Pancreas (tissue), 10 donors: ENCODE measurements at regions of chr2 and their contacts with region 1.

Region 1: GRCh38 chr2:37982147-37982582 is 57.1 kb downstream of the RMDN2 start:
- DNase-seq: peak in 5 of 6 donors; percentile 32 to 76 (median 53)
- ATAC-seq: peak; percentile 46 to 71 (median 60)
- H3K4me3 ChIP-seq: no peak overlapping the region
- H3K27ac ChIP-seq: no peak overlapping the region
- H3K4me1 ChIP-seq: peaks cover 0 to 3% (median 0%) of the 10 kb centered on the region in 3 donors
- H3K27me3 ChIP-seq: no peaks in the 10 kb centered on the region
- CTCF ChIP-seq: peak; percentile 61 to 84 (median 70)

Region 2: GRCh38 chr2:38115216-38116032 is 133.3 kb after region 1 on chr2:
- intact Hi-C with region 1: loop called in 2 of 3 experiments (anchors 10 kb)
- DNase-seq: peak; percentile 45 to 93 (median 76)
- ATAC-seq: peak; percentile 83 to 94 (median 90)
- H3K4me3 ChIP-seq: no peak overlapping the region
- H3K27ac ChIP-seq: no peak overlapping the region
- H3K4me1 ChIP-seq: peaks cover 0 to 21% (median 19%) of the 10 kb centered on the region in 3 donors
- H3K27me3 ChIP-seq: no peaks in the 10 kb centered on the region
- CTCF ChIP-seq: peak; percentile 86 to 95 (median 90)

Region 3: DNA sequence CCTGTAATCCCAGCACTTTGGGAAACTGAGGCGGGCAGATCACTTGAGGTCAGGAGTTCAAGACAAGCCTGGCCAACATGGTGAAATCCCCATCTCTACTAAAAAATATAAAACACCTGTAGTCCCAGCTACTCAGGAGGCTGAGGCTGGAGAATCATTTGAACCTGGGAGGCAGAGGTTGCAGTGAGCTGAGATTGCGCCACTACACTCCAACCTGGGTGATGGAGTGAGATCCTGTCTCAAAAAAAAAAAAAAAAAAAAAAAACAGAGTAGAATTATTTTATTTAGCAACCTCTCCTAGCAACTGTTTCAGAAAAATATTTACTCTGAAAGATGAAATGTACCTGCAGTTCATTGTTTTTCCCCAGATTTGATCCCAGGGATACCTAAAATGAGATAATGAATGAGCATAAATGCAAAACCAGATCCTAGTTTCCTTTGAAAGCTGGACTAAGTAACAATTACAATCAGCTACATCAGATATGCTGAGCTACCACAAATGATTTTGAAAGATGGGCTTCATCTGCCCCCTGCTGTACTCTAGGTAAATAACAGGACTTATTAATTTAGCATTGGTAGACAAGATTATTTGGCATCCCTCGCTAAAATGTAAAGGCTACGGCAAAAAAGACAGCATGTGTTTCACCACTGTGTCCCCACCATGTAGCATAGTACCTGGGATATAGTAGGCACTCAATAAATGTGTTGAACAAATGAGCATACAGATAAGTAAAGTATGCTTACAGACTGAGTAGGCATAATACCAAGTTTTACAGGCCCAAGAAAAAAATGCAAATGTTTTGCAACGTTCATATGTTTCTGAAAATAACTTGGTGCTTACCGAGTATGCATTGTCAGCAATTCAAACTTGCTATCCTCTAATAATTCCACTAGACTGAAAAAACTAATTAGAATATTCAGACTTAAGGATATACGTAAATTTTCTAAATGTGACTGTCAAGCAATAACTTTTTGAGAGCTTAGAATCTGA is 292.4 kb after region 1 on chr2:
- intact Hi-C with region 1: loop called in 1 of 3 experiments (anchors 10 kb)
- DNase-seq: peak in 2 of 6 donors; percentile 6 to 14
- ATAC-seq: peak in 3 of 4 donors; percentile 75 to 94 (median 85)
- H3K4me3 ChIP-seq: no peak overlapping the region
- H3K27ac ChIP-seq: no peak overlapping the region
- H3K4me1 ChIP-seq: no peaks in the 10 kb centered on the region
- H3K27me3 ChIP-seq: peaks cover 0 to 4% (median 0%) of the 10 kb centered on the region in 4 donors
- CTCF ChIP-seq: peak in 2 of 4 donors; percentile 25 to 41